ENCODE measurements at regions of chr10 and their contacts with region 1.

Region 1: DNA sequence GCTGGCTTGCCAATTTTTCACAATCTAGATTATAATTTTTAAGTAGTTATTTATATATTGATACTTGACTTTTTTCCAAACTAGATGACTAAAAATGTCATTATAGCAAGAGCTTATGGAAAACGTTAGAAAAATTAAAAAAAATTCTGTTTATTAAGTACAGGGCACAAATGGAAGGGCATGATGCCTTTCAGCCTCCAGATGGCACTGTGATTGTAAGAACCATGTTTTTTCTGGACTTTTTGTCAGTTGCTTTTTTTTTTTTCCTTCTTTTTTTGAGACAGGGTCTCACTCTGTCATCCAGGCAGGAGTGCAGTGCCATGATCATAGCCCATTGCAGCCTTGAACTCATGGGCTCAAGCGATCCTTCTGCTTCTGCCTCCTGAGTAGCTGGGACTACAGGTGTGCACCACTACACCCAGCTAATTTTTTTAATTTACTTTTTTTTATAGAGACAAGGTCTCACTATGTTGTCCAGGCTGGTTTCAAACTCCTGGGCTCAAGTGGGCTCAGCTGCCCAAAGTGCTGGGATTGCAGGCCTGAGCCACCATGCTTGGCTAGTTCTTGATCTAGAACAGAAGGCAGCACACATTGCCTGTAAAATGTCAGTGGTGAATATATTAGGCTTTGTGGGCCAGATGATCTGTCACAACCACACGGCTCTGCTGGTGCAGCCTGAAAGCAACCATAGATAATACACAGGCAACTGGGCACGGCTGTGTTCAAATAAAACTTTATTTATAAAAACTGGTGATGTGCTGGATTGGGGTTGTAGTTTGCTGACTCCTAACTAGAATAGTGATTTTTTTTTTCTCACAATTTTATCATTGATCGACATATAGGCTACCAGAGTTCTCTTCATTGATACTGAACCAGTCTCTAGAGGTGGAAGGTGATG is 27.4 kb downstream of the UCMA start:
- DNase-seq: peak; percentile 23
- H3K4me3 ChIP-seq: no peak overlapping the region
- H3K27ac ChIP-seq: no peak overlapping the region
- H3K4me1 ChIP-seq: no peaks in the 10 kb centered on the region
- H3K27me3 ChIP-seq: no peaks in the 10 kb centered on the region
- CTCF ChIP-seq: peak; percentile 61

Region 2: DNA sequence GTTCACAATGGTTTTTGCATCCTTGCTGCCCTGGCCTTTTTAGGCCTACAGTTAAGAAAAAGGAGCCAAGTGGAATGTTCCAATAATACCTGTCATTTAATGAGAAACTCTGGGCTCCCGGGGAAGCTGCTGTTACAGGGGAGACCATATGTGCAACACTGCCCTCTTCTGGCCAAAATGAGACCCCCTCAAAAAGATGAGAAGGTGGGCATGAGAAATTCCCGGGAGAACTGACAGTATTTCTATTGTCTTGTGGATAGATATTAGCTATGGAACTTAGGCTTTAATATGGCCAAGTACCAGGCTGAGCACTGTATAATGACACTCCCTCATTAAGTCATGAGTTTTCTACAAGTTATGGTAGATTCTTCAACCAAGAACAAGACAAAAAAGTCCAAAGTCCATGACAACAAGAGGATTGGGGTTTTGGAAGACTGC is 304.6 kb before region 1 on chr10:
- CTCF ChIA-PET with region 1: no interaction called
- POLR2A ChIA-PET with region 1: no interaction called
- intact Hi-C with region 1: no loop called
- DNase-seq: peak; percentile 81
- H3K4me3 ChIP-seq: no peak overlapping the region
- H3K27ac ChIP-seq: no peak overlapping the region
- H3K4me1 ChIP-seq: no peaks in the 10 kb centered on the region
- H3K27me3 ChIP-seq: no peaks in the 10 kb centered on the region
- CTCF ChIP-seq: peak; percentile 86

Region 3: GRCh38 chr10:13146383-13146782 is 60.4 kb before region 1 on chr10:
- CTCF ChIA-PET with region 1: interaction called, 10 read pairs
- POLR2A ChIA-PET with region 1: no interaction called
- intact Hi-C with region 1: no loop called
- DNase-seq: no peak
- H3K4me3 ChIP-seq: no peak overlapping the region
- H3K27ac ChIP-seq: no peak overlapping the region
- H3K4me1 ChIP-seq: no peaks in the 10 kb centered on the region
- H3K27me3 ChIP-seq: no peaks in the 10 kb centered on the region
- CTCF ChIP-seq: no peak

Region 4: DNA sequence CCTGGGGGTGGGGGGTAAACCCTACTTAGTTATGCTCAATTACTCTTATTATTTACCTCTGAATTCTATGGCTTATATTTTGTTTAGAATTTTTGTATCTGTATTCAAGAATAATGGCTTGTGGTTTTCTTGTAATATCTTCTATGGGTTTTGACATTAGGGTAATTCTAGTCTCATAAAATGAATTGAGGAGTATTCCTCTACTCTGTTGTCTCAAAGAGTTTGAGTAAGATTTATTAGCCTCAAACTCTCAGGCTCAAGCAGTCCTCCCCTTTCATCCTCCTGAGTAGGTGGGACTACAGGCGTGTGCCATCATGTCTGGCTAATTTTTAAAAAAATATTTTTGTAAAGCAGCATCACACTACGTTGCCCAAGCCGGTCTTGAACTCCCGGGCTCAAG is 46.9 kb after region 1 on chr10:
- CTCF ChIA-PET with region 1: no interaction called
- POLR2A ChIA-PET with region 1: no interaction called
- intact Hi-C with region 1: no loop called
- DNase-seq: no peak
- H3K4me3 ChIP-seq: no peak overlapping the region
- H3K27ac ChIP-seq: no peak overlapping the region
- H3K4me1 ChIP-seq: no peaks in the 10 kb centered on the region
- H3K27me3 ChIP-seq: peaks cover 4% of the 10 kb centered on the region
- CTCF ChIP-seq: no peak

Measured in A673 (cell line).